A673 (cell line): ENCODE measurements at regions of chr17 and their contacts with region 1.

Region 1: GRCh38 chr17:8383143-8383822 is at the start of gene RPL26:
- DNase-seq: peak; percentile 100
- H3K4me3 ChIP-seq: peak within 1 kb of the TSS; percentile 79
- H3K27ac ChIP-seq: peak within 1 kb of the TSS; percentile 91
- H3K4me1 ChIP-seq: peaks cover 33% of the 10 kb centered on the region
- H3K27me3 ChIP-seq: no peaks in the 10 kb centered on the region
- CTCF ChIP-seq: peak; percentile 97
- total RNA-seq, gene RPL26: 1,604 and 1,668 TPM in 2 replicates

Region 2: GRCh38 chr17:7167832-7168231 is 1215.5 kb before region 1 on chr17:
- CTCF ChIA-PET with region 1: no interaction called
- POLR2A ChIA-PET with region 1: no interaction called
- intact Hi-C with region 1: no loop called
- DNase-seq: no peak
- H3K4me3 ChIP-seq: no peak overlapping the region
- H3K27ac ChIP-seq: no peak overlapping the region
- H3K4me1 ChIP-seq: no peaks in the 10 kb centered on the region
- H3K27me3 ChIP-seq: no peaks in the 10 kb centered on the region
- CTCF ChIP-seq: no peak

Region 3: GRCh38 chr17:8435245-8436168 is 52.2 kb after region 1 on chr17 and contains the start of gene NDEL1:
- CTCF ChIA-PET with region 1: interaction called, 7 read pairs
- POLR2A ChIA-PET with region 1: no interaction called
- intact Hi-C with region 1: loop called (anchors 5 kb)
- DNase-seq: peak; percentile 99
- H3K4me3 ChIP-seq: peak within 1 kb of the TSS; percentile 98
- H3K27ac ChIP-seq: peak within 1 kb of the TSS; percentile 99
- H3K4me1 ChIP-seq: peaks cover 7% of the 10 kb centered on the region
- H3K27me3 ChIP-seq: no peaks in the 10 kb centered on the region
- CTCF ChIP-seq: no peak
- total RNA-seq, gene NDEL1: 71.1 and 76.5 TPM in 2 replicates